ENCODE measurements at regions of chr12 and their contacts with region 1.

Region 1: GRCh38 chr12:56636675-56637540 is 6.8 kb upstream of the BAZ2A start:
- DNase-seq: peak; percentile 98
- ATAC-seq: peak; percentile 69
- H3K4me3 ChIP-seq: peak overlapping the region; percentile 57 to 85 (median 78)
- H3K4me3 Mint-ChIP-seq: peak overlapping the region; percentile 89
- H3K27ac ChIP-seq: peak overlapping the region; percentile 75 to 83
- H3K27ac Mint-ChIP-seq: peak overlapping the region; percentile 95
- H3K4me1 ChIP-seq: peaks cover 46 to 53% of the 10 kb centered on the region in 2 donors
- H3K4me1 Mint-ChIP-seq: peaks cover 59% of the 10 kb centered on the region
- H3K27me3 ChIP-seq: no peaks in the 10 kb centered on the region
- H3K27me3 Mint-ChIP-seq: no peaks in the 10 kb centered on the region
- CTCF ChIP-seq: peak; percentile 70

Region 2: GRCh38 chr12:55926738-55927587 is 709.9 kb before region 1 on chr12:
- CTCF ChIA-PET with region 1: no interaction called
- POLR2A ChIA-PET with region 1: no interaction called
- intact Hi-C with region 1: loop called (anchors 5 kb)
- DNase-seq: peak; percentile 94
- ATAC-seq: peak; percentile 50
- H3K4me3 ChIP-seq: peak overlapping the region; percentile 88 to 100 (median 98)
- H3K4me3 Mint-ChIP-seq: peak overlapping the region; percentile 94
- H3K27ac ChIP-seq: peak overlapping the region; percentile 67 to 92
- H3K27ac Mint-ChIP-seq: peak overlapping the region; percentile 97
- H3K4me1 ChIP-seq: peaks cover 33 to 45% of the 10 kb centered on the region in 2 donors
- H3K4me1 Mint-ChIP-seq: peaks cover 54% of the 10 kb centered on the region
- H3K27me3 ChIP-seq: no peaks in the 10 kb centered on the region
- H3K27me3 Mint-ChIP-seq: no peaks in the 10 kb centered on the region
- CTCF ChIP-seq: peak; percentile 87

Region 3: DNA sequence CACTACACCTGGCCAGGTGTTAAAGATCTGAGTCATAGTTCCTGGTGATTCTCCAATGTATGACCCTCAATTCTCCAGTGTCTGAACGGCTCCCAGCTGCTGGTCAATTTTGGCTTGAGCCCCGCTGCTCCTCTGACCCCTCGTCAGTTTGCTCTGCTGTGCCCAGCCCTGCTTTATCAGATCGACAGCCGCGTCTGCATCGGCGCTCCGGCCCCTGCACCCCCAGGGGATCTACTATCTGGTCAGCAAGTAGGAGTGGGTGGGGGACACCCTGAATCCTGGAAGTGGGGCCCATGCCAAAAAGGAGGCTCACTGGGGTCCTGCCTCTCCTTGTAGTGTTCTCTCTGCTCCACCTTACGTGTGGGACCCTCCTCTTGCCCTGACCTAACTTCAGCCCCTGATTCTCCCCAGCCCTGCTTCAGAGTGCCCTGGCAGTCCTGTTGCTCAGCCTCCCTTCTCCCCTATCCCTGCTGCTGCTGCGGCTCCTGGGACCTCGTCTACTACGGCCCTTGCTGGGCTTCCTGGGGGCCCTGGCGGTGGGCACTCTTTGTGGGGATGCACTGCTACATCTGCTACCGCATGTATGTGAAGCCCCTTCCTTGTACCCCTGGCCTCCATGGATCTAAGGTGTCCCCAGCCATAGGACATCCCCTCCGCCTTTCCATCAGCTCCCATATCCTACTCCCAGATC is 402.0 kb before region 1 on chr12:
- CTCF ChIA-PET with region 1: no interaction called
- POLR2A ChIA-PET with region 1: no interaction called
- intact Hi-C with region 1: no loop called
- DNase-seq: no peak
- ATAC-seq: no peak
- H3K4me3 ChIP-seq: no peak overlapping the region
- H3K4me3 Mint-ChIP-seq: no peak overlapping the region
- H3K27ac ChIP-seq: no peak overlapping the region
- H3K27ac Mint-ChIP-seq: no peak overlapping the region
- H3K4me1 ChIP-seq: no peaks in the 10 kb centered on the region
- H3K4me1 Mint-ChIP-seq: no peaks in the 10 kb centered on the region
- H3K27me3 ChIP-seq: no peaks in the 10 kb centered on the region
- H3K27me3 Mint-ChIP-seq: no peaks in the 10 kb centered on the region
- CTCF ChIP-seq: no peak

Region 4: GRCh38 chr12:56333679-56334489 is 303.0 kb before region 1 on chr12 and contains the start of gene PAN2:
- CTCF ChIA-PET with region 1: no interaction called
- POLR2A ChIA-PET with region 1: no interaction called
- intact Hi-C with region 1: loop called (anchors 2 kb)
- DNase-seq: peak; percentile 98
- ATAC-seq: peak; percentile 90
- H3K4me3 ChIP-seq: peak within 1 kb of the TSS; percentile 63 to 88 (median 80)
- H3K4me3 Mint-ChIP-seq: peak within 1 kb of the TSS; percentile 99
- H3K27ac ChIP-seq: peak within 1 kb of the TSS; percentile 94 to 100
- H3K27ac Mint-ChIP-seq: peak within 1 kb of the TSS; percentile 100
- H3K4me1 ChIP-seq: peaks cover 35 to 44% of the 10 kb centered on the region in 2 donors
- H3K4me1 Mint-ChIP-seq: peaks cover 52% of the 10 kb centered on the region
- H3K27me3 ChIP-seq: no peaks in the 10 kb centered on the region
- H3K27me3 Mint-ChIP-seq: no peaks in the 10 kb centered on the region
- CTCF ChIP-seq: peak; percentile 65
- total RNA-seq, gene PAN2: 216 and 230 TPM in 2 replicates

Region 5: DNA sequence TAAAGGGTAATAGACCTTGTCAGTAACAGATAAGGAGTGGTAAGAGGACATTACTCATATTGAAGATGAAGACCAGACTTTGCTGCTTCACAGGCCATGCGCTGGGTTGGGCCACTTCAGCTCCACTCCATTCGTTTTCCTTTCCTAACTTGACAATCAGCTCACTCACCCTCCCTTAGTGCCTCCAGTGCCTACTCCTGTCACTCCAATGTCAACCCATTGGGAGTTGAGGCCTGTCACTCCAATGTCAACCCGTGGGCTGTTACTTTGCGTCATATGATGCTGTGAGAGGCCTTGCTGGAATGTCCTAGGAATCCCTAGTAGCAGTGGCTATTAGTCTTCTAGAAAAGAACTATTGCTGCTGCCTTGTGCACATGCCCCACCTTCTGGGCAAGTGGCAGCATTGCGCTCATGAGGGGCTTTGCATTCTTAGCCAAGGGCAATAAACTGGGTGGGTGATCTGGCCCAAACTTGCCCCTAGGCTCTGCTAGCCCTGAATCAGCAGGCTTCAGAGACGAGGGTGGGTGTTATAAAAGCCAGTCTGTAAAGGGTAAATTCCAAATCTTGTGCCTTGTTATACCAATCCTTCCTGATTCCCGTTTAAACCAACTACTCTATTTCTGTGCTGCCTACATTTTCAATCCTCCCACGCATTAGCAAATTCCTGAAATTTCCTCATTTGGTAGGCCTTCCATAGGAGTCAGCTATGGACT is 42.8 kb before region 1 on chr12:
- CTCF ChIA-PET with region 1: interaction called, 48 read pairs
- POLR2A ChIA-PET with region 1: interaction called, 3 read pairs
- intact Hi-C with region 1: no loop called
- DNase-seq: peak; percentile 68
- ATAC-seq: peak; percentile 82
- H3K4me3 ChIP-seq: no peak overlapping the region
- H3K4me3 Mint-ChIP-seq: no peak overlapping the region
- H3K27ac ChIP-seq: no peak overlapping the region
- H3K27ac Mint-ChIP-seq: no peak overlapping the region
- H3K4me1 ChIP-seq: no peaks in the 10 kb centered on the region
- H3K4me1 Mint-ChIP-seq: peaks cover 3% of the 10 kb centered on the region
- H3K27me3 ChIP-seq: no peaks in the 10 kb centered on the region
- H3K27me3 Mint-ChIP-seq: no peaks in the 10 kb centered on the region
- CTCF ChIP-seq: peak; percentile 86

Region 6: DNA sequence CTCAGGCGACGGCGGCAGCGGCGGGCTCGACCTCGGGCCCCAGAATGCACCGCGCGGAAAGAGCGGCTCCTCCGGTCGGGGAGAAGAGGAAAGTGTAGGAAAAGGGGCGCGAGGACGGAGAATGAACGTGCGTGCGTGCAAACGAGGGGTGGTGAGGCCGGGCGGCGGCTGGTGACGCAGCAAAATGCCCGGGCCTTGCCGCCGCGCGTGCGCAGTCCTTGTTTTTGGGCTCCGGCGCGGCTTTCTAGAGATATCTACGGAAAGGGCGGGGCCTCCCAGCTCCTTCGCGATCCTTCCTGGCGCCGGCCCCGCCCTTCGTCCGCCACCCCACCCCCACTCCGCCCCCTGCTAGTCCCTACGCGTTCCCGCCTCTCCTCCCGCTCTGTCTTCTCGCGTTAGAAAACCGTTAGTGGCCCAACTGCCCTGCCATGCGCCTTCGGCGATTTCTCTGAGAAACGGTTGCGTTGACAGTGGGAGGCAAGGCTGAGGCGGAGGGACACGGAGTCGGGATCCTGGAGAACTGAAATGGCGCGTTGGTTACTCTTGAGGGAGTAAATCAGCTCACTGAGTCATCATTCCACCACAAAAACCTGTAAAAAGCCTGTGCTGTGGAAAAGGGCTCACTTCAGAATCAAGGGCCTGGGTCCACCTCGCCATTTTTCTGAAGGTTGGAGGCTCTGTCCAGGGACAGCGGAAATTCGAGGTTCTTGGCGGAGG is 51.4 kb after region 1 on chr12 and contains the start of gene PTGES3:
- CTCF ChIA-PET with region 1: interaction called, 21 read pairs
- POLR2A ChIA-PET with region 1: interaction called, 13 read pairs
- intact Hi-C with region 1: loop called (anchors 2 kb)
- DNase-seq: peak; percentile 99
- ATAC-seq: peak; percentile 80
- H3K4me3 ChIP-seq: peak within 1 kb of the TSS; percentile 72 to 99 (median 92)
- H3K4me3 Mint-ChIP-seq: peak within 1 kb of the TSS; percentile 97
- H3K27ac ChIP-seq: peak within 1 kb of the TSS; percentile 95
- H3K27ac Mint-ChIP-seq: peak within 1 kb of the TSS; percentile 98
- H3K4me1 ChIP-seq: peaks cover 29 to 44% of the 10 kb centered on the region in 2 donors
- H3K4me1 Mint-ChIP-seq: peaks cover 35% of the 10 kb centered on the region
- H3K27me3 ChIP-seq: no peaks in the 10 kb centered on the region
- H3K27me3 Mint-ChIP-seq: no peaks in the 10 kb centered on the region
- CTCF ChIP-seq: no peak
- total RNA-seq, gene PTGES3: 121 and 124 TPM in 2 replicates

Region 7: GRCh38 chr12:57005980-57006808 is 369.3 kb after region 1 on chr12 and contains the start of gene ZBTB39:
- CTCF ChIA-PET with region 1: no interaction called
- POLR2A ChIA-PET with region 1: no interaction called
- intact Hi-C with region 1: loop called (anchors 10 kb)
- DNase-seq: peak; percentile 84
- ATAC-seq: peak; percentile 92
- H3K4me3 ChIP-seq: peak within 1 kb of the TSS; percentile 39 to 87 (median 70)
- H3K4me3 Mint-ChIP-seq: peak within 1 kb of the TSS; percentile 91
- H3K27ac ChIP-seq: peak within 1 kb of the TSS; percentile 43 to 86
- H3K27ac Mint-ChIP-seq: peak within 1 kb of the TSS; percentile 93
- H3K4me1 ChIP-seq: peaks cover 16 to 21% of the 10 kb centered on the region in 2 donors
- H3K4me1 Mint-ChIP-seq: peaks cover 41% of the 10 kb centered on the region
- H3K27me3 ChIP-seq: no peaks in the 10 kb centered on the region
- H3K27me3 Mint-ChIP-seq: no peaks in the 10 kb centered on the region
- CTCF ChIP-seq: peak; percentile 61
- total RNA-seq, gene ZBTB39: 13.9 and 15.6 TPM in 2 replicates

Region 8: GRCh38 chr12:57751788-57752667 is 1115.1 kb after region 1 on chr12 and contains the start of gene CDK4:
- CTCF ChIA-PET with region 1: no interaction called
- POLR2A ChIA-PET with region 1: no interaction called
- intact Hi-C with region 1: loop called (anchors 5 kb)
- DNase-seq: peak; percentile 100
- ATAC-seq: peak; percentile 78
- H3K4me3 ChIP-seq: peak within 1 kb of the TSS; percentile 51 to 84 (median 78)
- H3K4me3 Mint-ChIP-seq: peak within 1 kb of the TSS; percentile 91
- H3K27ac ChIP-seq: peak within 1 kb of the TSS; percentile 74 to 98
- H3K27ac Mint-ChIP-seq: peak within 1 kb of the TSS; percentile 95
- H3K4me1 ChIP-seq: peaks cover 39 to 50% of the 10 kb centered on the region in 2 donors
- H3K4me1 Mint-ChIP-seq: peaks cover 55% of the 10 kb centered on the region
- H3K27me3 ChIP-seq: no peaks in the 10 kb centered on the region
- H3K27me3 Mint-ChIP-seq: no peaks in the 10 kb centered on the region
- CTCF ChIP-seq: no peak
- total RNA-seq, gene CDK4: 43.1 and 44.6 TPM in 2 replicates